ENCODE measurements at regions of chr2 and their contacts with region 1.

Region 1: DNA sequence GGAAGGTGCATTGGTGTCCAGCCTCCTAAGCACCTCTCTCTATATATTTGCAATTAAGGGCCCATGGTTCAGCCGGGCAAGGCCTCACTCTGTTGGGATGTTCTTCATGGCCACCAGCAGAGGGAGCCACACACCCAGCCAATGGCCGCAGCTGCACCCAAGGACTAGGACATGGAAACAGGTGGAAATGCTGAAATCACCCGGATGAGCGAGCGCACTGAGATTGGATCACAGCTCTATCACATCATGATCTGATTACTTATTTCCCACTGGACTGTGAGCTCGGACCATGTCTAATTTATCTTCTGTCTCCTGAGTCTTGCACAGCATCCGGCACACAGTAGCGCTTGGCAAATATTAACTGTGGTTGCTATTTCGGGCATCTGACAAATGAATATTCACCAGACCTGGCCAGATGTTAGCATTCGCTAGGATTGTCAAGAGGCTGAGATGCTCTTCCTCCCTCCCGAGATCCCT is 31.2 kb downstream of the KIF3C start:
- DNase-seq: peak; percentile 95 to 97
- ATAC-seq: peak; percentile 92 to 95
- H3K4me3 ChIP-seq: peak overlapping the region; percentile 15; the same call in 2 of the 3 replicates
- H3K27ac ChIP-seq: peak overlapping the region; percentile 60 to 77
- H3K4me1 ChIP-seq: peaks cover 27% of the 10 kb centered on the region
- CTCF ChIP-seq: peak; percentile 99
- EP300 ChIP-seq: no peak
- POLR2A ChIP-seq: no peak
- RAD21 ChIP-seq: peak; percentile 100

Region 2: GRCh38 chr2:25772078-25772477 is 179.0 kb before region 1 on chr2:
- CTCF ChIA-PET with region 1: no interaction called
- POLR2A ChIA-PET with region 1: no interaction called
- DNase-seq: no peak
- ATAC-seq: no peak
- H3K4me3 ChIP-seq: no peak overlapping the region
- H3K27ac ChIP-seq: 0 out of 6 replicates have a peak overlapping the region, but pooled peaks of 1 of the 2 experiments have one; percentile 39
- H3K4me1 ChIP-seq: no peaks in the 10 kb centered on the region
- CTCF ChIP-seq: no peak
- EP300 ChIP-seq: no peak
- POLR2A ChIP-seq: no peak
- RAD21 ChIP-seq: no peak

Region 3: GRCh38 chr2:25851740-25852503 is 99.2 kb before region 1 on chr2:
- CTCF ChIA-PET with region 1: interaction called, 31 read pairs
- POLR2A ChIA-PET with region 1: no interaction called
- DNase-seq: peak; percentile 68 to 87
- ATAC-seq: peak; percentile 93 to 94
- H3K4me3 ChIP-seq: 0 out of 3 replicates have a peak overlapping the region, but pooled peaks have one; percentile 16
- H3K27ac ChIP-seq: peak overlapping the region; percentile 62 to 86
- H3K4me1 ChIP-seq: peaks cover 15% of the 10 kb centered on the region; the same call in 2 of the 3 replicates
- CTCF ChIP-seq: peak; percentile 97
- EP300 ChIP-seq: no peak
- POLR2A ChIP-seq: no peak
- RAD21 ChIP-seq: peak; percentile 86 to 87

Region 4: DNA sequence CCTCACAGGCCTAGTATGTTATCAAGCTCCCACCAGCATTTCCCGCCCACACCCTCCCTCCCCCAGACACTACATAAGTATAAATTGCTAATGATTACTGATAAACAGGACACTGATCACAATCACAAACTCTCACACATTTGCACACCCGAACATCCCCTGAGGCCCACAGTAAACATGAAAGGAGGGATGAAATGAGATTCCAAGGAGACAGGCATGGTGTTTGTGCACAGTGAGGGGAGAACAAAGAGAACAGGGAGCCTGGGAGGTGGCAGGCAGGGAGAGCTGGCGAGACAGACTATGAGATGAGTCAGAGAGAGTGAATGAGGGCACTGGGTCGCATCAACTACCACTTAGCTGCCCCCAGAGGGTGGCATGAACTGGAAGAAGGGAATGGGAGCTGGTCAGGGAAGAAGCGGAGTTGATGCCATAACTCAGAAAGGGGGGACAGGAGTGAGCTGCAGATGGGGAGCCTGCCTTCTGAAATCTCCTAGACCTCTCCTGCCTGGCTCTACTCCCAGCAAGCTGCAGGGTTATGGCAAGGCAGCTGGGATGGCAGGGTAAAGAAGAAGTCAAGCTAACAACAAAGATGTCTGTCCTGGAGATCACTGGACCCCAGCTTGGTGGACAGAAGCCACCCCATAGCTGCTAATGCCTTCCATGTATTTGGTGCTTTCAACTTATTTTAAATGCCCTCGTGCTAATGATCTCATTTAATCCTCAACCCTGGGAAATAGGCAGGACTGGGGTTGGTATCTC is 26.1 kb after region 1 on chr2:
- CTCF ChIA-PET with region 1: interaction called, 96 read pairs
- POLR2A ChIA-PET with region 1: no interaction called
- DNase-seq: peak; percentile 75 to 78
- ATAC-seq: peak; percentile 74 to 79
- H3K4me3 ChIP-seq: peak overlapping the region; percentile 7; the same call in 1 of the 3 replicates
- H3K27ac ChIP-seq: peak overlapping the region; percentile 87 to 90
- H3K4me1 ChIP-seq: peaks cover 76% of the 10 kb centered on the region
- CTCF ChIP-seq: no peak
- EP300 ChIP-seq: peak in 1 of 2 experiments; percentile 23; a peak in 1 of 5 replicates
- POLR2A ChIP-seq: no peak; the same call in 1 of the 2 replicates
- RAD21 ChIP-seq: peak in 1 of 2 experiments; percentile 10; a peak in 1 of 5 replicates

Region 5: DNA sequence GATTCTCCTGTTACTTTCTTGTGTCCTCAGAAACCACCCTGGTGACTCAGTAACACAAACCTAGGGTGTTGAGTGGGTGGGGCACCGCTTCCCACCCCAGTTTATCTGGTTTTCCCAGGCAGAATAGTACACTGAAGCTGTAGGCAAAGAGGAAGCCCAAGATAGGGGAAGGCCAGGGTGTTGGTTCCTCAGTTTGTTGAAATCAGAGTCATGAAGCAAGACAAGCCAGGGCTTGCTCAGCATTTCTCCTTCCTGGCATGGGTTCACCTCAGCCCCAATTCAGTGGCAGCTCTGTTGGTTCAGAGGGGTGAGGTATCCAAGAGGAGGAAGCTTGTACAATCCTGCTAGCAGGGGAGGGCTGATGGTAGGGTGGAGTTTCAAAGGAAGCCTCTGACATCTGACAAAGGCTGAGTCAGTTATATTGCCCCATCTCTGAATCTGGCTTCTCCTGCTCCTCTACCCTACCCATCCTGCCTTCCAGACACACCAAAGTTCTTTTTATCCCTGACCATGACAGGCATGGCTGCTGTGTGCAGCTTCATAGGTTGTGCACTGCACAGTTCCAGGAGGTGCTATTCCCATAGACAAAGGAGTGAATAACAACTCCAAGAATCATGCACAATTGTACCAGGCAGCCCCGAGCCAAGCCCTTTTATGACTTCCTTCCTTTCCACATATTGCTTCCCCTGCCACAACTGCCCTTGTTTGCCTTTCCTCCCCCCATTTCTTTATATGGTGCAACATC is 57.9 kb after region 1 on chr2:
- CTCF ChIA-PET with region 1: interaction called, 11 read pairs
- POLR2A ChIA-PET with region 1: no interaction called
- DNase-seq: peak; percentile 68 to 91
- ATAC-seq: peak; percentile 46 to 55
- H3K4me3 ChIP-seq: no peak overlapping the region
- H3K27ac ChIP-seq: peak overlapping the region; percentile 90 to 93
- H3K4me1 ChIP-seq: peaks cover 52% of the 10 kb centered on the region
- CTCF ChIP-seq: no peak
- EP300 ChIP-seq: peak; percentile 50 to 74; a peak in 2 of 5 replicates
- POLR2A ChIP-seq: no peak
- RAD21 ChIP-seq: peak in 1 of 2 experiments; percentile 26; a peak in 2 of 5 replicates

Region 6: DNA sequence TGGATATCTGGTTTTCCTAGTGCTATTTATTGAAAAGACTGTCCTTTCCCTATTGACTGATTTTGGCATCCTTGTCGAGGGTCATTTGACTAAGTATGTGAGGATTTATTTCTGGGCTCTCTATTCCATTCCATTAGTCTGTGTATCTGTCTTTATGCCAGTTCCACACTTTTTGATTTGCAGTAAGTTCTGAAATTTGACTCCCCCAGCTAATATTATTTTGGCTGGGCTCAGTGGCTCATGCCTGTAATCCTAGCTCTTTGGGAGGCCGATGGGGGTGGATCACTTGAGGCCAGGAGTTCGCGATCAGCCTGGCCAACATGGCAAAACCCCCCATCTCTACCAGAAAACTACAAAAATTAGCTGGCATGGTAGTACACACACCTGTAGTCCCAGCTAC is 175.0 kb after region 1 on chr2:
- CTCF ChIA-PET with region 1: interaction called, 13 read pairs
- POLR2A ChIA-PET with region 1: no interaction called
- DNase-seq: no peak
- ATAC-seq: no peak
- H3K4me3 ChIP-seq: no peak overlapping the region
- H3K27ac ChIP-seq: 0 out of 6 replicates have a peak overlapping the region, but pooled peaks of 1 of the 2 experiments have one; percentile 1
- H3K4me1 ChIP-seq: peaks cover 43% of the 10 kb centered on the region
- CTCF ChIP-seq: no peak
- EP300 ChIP-seq: no peak
- POLR2A ChIP-seq: no peak
- RAD21 ChIP-seq: no peak

Region 7: DNA sequence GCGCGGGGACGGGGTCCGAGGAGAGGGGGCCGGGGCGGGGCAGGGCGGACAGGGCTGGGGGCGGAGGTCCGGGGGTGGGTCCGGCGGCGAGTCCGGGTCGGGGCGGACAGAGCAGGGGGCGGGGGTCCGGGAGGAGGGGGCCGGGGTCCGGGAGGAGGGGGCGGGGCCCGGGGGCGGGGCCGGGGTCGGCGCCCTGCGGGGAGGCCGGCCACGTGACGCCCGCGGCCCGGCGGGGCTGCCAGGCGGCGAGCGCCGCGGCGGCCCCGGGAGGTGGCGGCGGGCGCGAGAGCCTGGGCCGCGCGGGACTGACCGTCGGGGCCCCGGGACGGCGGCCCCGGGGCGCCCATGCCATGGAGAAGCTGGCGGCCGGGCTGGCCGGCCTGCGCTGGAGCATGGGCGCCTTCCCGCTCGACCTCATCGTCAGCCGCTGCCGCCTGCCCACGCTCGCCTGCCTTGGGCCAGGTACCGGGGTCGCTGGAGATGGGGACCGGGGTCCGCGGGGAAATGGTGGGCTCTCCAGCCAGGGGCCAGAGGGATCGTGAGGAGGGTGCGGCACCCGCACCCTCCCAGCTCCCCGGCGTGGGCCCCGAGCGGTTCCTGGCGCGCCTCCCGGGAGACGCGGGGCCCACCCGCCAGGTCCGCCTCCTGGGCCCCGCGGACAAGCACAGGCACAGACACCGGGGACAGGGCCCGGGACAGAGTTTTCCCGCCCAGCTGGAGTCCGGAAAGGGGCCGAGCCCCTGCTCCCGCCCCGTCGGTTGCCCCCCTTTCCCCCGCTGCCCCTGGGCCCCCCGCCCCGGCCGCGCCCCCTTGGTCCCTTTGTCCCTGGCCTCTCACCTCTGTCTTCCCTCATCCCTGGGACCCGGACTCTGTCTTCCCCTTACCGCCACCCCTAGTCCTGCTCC is 222.0 kb after region 1 on chr2 and contains the start of gene GAREM2:
- CTCF ChIA-PET with region 1: interaction called, 14 read pairs
- POLR2A ChIA-PET with region 1: no interaction called
- DNase-seq: peak in 1 of 2 experiments; percentile 59
- ATAC-seq: peak; percentile 27 to 60
- H3K4me3 ChIP-seq: peak within 1 kb of the TSS; percentile 68
- H3K27ac ChIP-seq: peak within 1 kb of the TSS; percentile 76 to 93
- H3K4me1 ChIP-seq: peaks cover 6% of the 10 kb centered on the region; the same call in 1 of the 3 replicates
- CTCF ChIP-seq: no peak
- EP300 ChIP-seq: no peak
- POLR2A ChIP-seq: no peak
- RAD21 ChIP-seq: no peak
- polyA plus RNA-seq, gene GAREM2: 5.1 and 6.6 TPM in 2 replicates